ENCODE measurements at regions of chr15 and their contacts with region 1.

Region 1: GRCh38 chr15:89399238-89400120 is 64.9 kb upstream of the POLG start:
- DNase-seq: peak; percentile 66
- H3K4me3 Mint-ChIP-seq: peak overlapping the region; percentile 73
- H3K27ac Mint-ChIP-seq: no peak overlapping the region
- H3K4me1 Mint-ChIP-seq: peaks cover 14% of the 10 kb centered on the region
- H3K27me3 Mint-ChIP-seq: peaks cover 60% of the 10 kb centered on the region

Region 2: DNA sequence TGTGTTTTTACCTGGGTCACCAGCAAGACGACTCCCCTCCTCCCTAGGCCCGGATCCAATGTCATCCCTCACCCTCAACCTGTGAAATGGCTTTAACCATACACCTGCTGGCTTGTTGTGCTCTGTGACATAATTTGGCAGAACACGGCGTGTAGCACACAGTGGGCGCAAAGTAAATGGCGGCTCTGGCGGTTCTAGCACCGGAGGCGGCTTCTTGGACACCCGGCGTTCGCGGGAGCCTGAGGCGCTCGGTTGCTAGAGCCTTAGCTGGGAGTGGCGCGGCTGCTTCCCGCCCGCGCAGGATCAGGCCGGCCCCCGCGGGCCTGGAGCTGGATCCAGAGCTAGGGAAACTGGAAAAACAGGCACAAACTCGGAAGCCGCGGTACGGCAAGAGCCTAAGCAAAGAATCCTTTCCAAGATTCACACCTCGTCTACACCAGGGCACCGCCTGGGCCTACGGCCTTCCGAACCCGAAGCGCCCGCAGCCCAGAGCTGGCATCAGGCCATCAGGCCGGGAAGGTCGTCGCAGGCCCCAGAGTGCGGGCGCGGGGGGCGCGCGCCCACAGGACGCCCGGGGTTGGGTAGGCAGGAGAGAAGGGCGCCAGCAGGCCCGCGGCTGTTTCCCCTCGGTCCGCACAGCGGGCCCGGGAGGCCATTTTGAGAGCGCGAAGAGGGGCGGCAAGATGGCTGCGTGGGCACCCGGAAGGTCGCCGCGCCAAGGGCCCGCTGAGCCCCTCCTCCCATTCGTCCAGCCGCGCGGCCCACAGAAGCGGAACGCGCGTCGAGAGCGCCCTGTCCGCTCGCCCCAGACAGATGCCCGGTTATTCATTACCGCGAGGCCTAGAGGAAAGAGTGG is 21.0 kb before region 1 on chr15:
- CTCF ChIA-PET with region 1: interaction called, 3 read pairs
- intact Hi-C with region 1: loop called (anchors 2 kb)
- DNase-seq: no peak
- H3K4me3 Mint-ChIP-seq: peak overlapping the region; percentile 69
- H3K27ac Mint-ChIP-seq: peak overlapping the region; percentile 51
- H3K4me1 Mint-ChIP-seq: peaks cover 5% of the 10 kb centered on the region
- H3K27me3 Mint-ChIP-seq: peaks cover 55% of the 10 kb centered on the region

Measured in activated naive CD4-positive, alpha-beta T cell treated with anti-CD3 and anti-CD28 coated beads for 36 hours (primary cell).